CD14-positive monocyte (primary cell): ENCODE measurements at regions of chr1 and their contacts with region 1.

Region 1: GRCh38 chr1:185338719-185339622 is 21.9 kb upstream of the IVNS1ABP start:
- DNase-seq: peak; percentile 68 to 92 (median 87)
- H3K4me3 ChIP-seq: peak overlapping the region in 1 of 3 experiments; percentile 51
- H3K4me3 Mint-ChIP-seq: peak overlapping the region; percentile 28 to 60
- H3K27ac ChIP-seq: peak overlapping the region; percentile 75 to 88
- H3K27ac Mint-ChIP-seq: peak overlapping the region; percentile 90 to 97 (median 95)
- H3K4me1 ChIP-seq: peaks cover 46 to 56% of the 10 kb centered on the region in 2 donors
- H3K4me1 Mint-ChIP-seq: peaks cover 48% of the 10 kb centered on the region
- H3K27me3 ChIP-seq: no peaks in the 10 kb centered on the region
- H3K27me3 Mint-ChIP-seq: no peaks in the 10 kb centered on the region
- CTCF ChIP-seq: no peak

Region 2: DNA sequence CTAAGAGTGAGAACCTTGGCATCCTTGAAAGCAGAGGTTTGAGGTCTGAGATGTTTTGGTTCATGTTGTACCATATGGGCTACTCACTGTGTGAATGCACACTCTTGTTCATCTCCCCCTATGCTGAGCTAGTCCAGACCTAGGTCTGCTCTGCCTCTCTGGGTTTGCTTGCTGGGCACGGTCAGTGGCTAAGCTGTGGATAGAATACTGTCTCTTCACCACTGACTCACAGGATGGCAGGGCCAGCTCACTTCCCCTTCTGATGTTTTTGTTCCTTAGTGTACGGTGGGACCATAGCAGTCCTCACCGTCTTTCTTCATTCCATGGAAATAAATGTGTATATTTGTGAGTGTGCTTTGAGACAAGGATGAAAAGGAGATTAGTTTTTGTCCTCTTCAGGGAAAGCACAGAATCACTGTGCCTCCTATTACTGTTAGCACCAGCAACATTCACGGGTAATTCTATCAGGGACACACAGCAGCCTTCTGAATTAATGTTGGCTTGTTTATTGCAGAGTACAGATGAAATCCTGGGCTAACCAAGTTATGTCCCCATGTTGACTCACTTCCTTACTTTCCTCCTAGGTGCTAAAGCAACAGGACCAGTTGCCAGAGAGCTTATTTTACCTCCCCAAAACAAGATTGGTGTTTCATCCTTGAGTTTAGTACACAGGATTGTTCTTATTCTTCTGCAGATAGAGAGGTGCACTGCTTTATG is 35.0 kb after region 1 on chr1:
- intact Hi-C with region 1: loop called in 1 of 2 experiments (anchors 5 kb)
- DNase-seq: peak; percentile 91 to 97 (median 95)
- H3K4me3 ChIP-seq: peak overlapping the region in 1 of 3 experiments; percentile 7
- H3K4me3 Mint-ChIP-seq: peak overlapping the region in 1 of 2 donors; percentile 48
- H3K27ac ChIP-seq: peak overlapping the region; percentile 69 to 97
- H3K27ac Mint-ChIP-seq: no peak overlapping the region
- H3K4me1 ChIP-seq: peaks cover 53 to 54% of the 10 kb centered on the region in 2 donors
- H3K4me1 Mint-ChIP-seq: peaks cover 21% of the 10 kb centered on the region
- H3K27me3 ChIP-seq: no peaks in the 10 kb centered on the region
- H3K27me3 Mint-ChIP-seq: no peaks in the 10 kb centered on the region
- CTCF ChIP-seq: no peak